Activated naive CD8-positive, alpha-beta T cell treated with anti-CD3 and anti-CD28 coated beads, Interleukin-2, amount 10 ng/mL, durations not matched to agents 7 days and 5 days (primary cell): ENCODE measurements at regions of chr20 and their contacts with region 1.

Region 1: DNA sequence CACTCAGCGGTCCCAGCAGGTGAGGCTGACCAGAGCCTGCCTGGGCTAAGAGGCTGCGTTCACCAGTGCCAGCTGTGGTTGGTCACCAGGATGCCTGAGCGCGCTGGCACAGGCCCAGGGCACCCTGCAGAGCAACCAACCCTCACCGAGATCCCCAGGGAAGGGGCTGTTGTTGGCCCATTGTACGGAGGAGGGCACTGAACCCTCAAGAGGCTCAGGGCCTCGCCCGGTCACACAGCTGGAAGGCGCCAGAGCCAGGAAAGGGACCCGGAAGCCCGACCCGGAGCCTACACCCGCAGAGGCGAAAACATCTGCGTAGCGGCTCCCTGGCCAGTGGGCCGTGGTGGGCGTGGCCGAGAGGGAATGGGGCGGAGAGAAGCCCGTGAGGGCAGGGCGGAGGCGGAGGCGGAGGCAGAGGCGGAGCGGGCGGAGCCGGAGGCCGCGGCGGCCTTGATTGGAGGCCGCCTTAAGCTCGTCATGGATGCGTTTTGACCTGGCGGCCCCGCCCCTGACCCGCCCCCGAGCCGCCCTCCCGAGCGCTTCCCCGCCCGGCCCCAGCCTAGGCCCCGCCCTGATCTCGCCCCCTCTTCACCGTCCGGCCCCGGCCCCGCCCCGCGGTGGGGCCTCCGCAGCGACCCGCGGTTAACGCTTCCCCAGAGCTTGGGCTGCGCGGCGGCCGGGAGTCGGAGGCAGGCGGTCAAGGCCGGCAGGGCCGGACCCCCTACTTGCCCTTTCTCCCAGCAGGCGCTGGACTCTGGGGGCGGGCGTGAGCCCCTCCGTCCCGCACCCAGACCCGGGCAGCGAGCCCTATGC is 2.2 kb upstream of the MRGBP start:
- DNase-seq: peak; percentile 99
- ATAC-seq: peak; percentile 68
- H3K4me3 Mint-ChIP-seq: peak overlapping the region; percentile 88
- H3K27ac Mint-ChIP-seq: peak overlapping the region; percentile 97
- H3K4me1 Mint-ChIP-seq: peaks cover 15% of the 10 kb centered on the region
- H3K27me3 Mint-ChIP-seq: no peaks in the 10 kb centered on the region

Region 2: GRCh38 chr20:62616728-62617621 is 177.1 kb before region 1 on chr20:
- POLR2A ChIA-PET with region 1: interaction called, 11 read pairs
- DNase-seq: peak; percentile 85
- ATAC-seq: peak; percentile 48
- H3K4me3 Mint-ChIP-seq: peak overlapping the region; percentile 63
- H3K27ac Mint-ChIP-seq: peak overlapping the region; percentile 98
- H3K4me1 Mint-ChIP-seq: peaks cover 35% of the 10 kb centered on the region
- H3K27me3 Mint-ChIP-seq: peaks cover 7% of the 10 kb centered on the region

Region 3: GRCh38 chr20:62642040-62642665 is 152.0 kb before region 1 on chr20 and contains the start of gene SLCO4A1:
- POLR2A ChIA-PET with region 1: interaction called, 17 read pairs
- DNase-seq: peak; percentile 96
- ATAC-seq: peak; percentile 85
- H3K4me3 Mint-ChIP-seq: peak within 1 kb of the TSS; percentile 92
- H3K27ac Mint-ChIP-seq: peak within 1 kb of the TSS; percentile 85
- H3K4me1 Mint-ChIP-seq: peaks cover 23% of the 10 kb centered on the region
- H3K27me3 Mint-ChIP-seq: peaks cover 8% of the 10 kb centered on the region
- total RNA-seq, gene SLCO4A1: 57.5 to 61.9 TPM

Region 4: GRCh38 chr20:62740286-62741141 is 53.6 kb before region 1 on chr20:
- POLR2A ChIA-PET with region 1: interaction called, 10 read pairs
- DNase-seq: peak; percentile 74
- ATAC-seq: peak; percentile 83
- H3K4me3 Mint-ChIP-seq: peak overlapping the region; percentile 71
- H3K27ac Mint-ChIP-seq: peak overlapping the region; percentile 96
- H3K4me1 Mint-ChIP-seq: peaks cover 32% of the 10 kb centered on the region
- H3K27me3 Mint-ChIP-seq: peaks cover 3% of the 10 kb centered on the region